Breast epithelium (tissue), 4 donors: ENCODE measurements at regions of chr19 and their contacts with region 1.

Region 1: GRCh38 chr19:46661020-46661731 is at the start of gene DACT3:
- DNase-seq: peak; percentile 100
- H3K4me3 ChIP-seq: peak within 1 kb of the TSS; percentile 54 to 88 (median 63)
- H3K27ac ChIP-seq: peak within 1 kb of the TSS; percentile 82 to 83
- H3K4me1 ChIP-seq: peaks cover 5 to 12% of the 10 kb centered on the region in 2 donors
- H3K27me3 ChIP-seq: peaks cover 0 to 18% of the 10 kb centered on the region in 2 donors
- CTCF ChIP-seq: peak in 2 of 3 donors; percentile 15 to 39
- POLR2A ChIP-seq: no peak
- total RNA-seq, gene DACT3: 0.48 to 3.9 (median 1.9) TPM

Region 2: DNA sequence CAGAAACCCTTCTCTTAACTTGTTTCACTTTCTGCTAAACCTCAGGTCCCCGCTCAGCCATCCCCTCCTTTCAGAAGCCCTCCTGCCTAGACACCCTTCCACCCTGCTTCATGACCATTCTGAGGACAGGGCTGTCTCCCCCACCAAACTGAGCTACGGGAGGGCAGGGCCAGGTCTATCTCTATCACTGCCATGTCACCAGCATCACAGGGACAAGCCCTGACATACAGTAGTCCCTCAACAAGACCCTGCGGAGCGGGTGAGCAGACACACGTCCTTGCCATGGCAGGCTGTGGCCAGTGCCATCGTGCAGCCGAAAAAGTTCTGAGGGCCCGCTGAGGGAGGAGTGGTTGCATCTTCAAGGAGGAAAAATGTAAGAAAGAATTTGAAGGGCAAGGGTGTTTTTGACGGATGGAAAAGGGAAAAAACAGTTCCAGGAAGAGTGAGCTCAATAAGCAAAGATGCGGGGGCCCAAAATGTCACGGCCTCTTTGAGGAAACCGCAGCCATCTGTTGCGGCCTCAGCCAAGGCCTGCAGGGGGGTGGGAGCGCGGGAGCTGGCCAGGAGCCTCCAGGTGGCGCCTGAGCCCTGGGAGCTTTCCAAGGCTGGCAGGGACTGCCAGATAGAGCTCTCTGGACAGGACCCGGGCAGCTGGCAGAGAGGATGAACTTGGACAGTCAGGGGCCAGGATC is 44.4 kb before region 1 on chr19:
- intact Hi-C with region 1: loop called (anchors 5 kb)
- DNase-seq: peak in 1 of 2 donors; percentile 56
- H3K4me3 ChIP-seq: no peak overlapping the region
- H3K27ac ChIP-seq: peak overlapping the region; percentile 38 to 68
- H3K4me1 ChIP-seq: peaks cover 11 to 14% of the 10 kb centered on the region in 2 donors
- H3K27me3 ChIP-seq: no peaks in the 10 kb centered on the region
- CTCF ChIP-seq: peak in 2 of 3 donors; percentile 31 to 35
- POLR2A ChIP-seq: no peak